Left ventricle myocardium superior (tissue), 1 donor: ENCODE measurements at regions of chr4 and their contacts with region 1.

Region 1: GRCh38 chr4:158856852-158857251 is 88.0 kb downstream of the FNIP2 start:
- DNase-seq: no peak
- ATAC-seq: peak; percentile 60

Region 2: GRCh38 chr4:159206427-159206871 is 349.6 kb after region 1 on chr4:
- intact Hi-C with region 1: loop called (anchors 10 kb)
- DNase-seq: no peak
- ATAC-seq: no peak

Region 3: DNA sequence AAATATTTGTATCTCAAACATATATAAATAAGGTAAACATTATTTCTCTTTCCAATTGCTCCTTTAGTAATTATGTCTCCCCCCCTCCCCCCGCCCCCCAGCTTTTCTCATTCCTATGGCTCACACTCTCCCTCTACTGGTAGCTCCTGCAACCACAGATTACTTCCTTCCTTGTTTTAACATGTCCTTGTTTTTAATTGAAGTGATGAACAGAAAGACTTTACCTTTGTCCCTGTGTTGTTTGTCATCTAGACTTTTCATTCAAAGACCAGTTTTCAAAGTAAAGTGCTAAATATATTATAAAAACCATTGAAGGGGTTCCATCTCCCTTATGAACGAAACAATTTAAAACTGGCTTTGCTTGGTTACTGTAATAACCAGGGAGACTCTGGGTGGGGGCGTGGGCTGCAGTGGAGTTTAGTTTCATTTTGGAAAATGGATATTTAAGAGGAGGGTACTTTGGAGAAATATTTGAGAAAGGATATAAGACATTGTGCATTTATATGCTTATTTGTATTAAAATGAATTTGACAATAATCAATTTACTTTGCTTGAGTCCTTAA is 598.9 kb after region 1 on chr4:
- intact Hi-C with region 1: loop called (anchors 10 kb)
- DNase-seq: no peak
- ATAC-seq: no peak

Region 4: DNA sequence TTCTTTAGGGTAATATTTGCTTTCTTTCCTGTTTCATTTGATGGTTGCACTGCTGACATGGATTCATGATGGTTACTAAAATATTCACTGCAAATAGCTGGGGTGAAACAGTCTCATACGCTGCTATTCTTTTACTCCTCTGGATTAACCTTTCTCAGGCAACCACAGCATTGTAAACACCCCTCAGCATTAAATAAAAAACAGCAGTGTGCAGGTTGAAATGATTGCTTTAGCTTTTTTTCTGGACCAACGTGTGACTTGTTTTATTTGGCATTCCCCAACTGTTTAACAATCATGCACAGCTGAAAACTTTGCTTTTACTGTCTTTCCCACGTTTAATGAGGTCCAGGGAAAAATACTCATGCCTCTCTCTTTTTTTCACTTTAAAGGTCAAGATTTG is 736.8 kb after region 1 on chr4:
- intact Hi-C with region 1: no loop called
- DNase-seq: no peak
- ATAC-seq: no peak